ENCODE measurements at regions of chr19 and their contacts with region 1.

Region 1: DNA sequence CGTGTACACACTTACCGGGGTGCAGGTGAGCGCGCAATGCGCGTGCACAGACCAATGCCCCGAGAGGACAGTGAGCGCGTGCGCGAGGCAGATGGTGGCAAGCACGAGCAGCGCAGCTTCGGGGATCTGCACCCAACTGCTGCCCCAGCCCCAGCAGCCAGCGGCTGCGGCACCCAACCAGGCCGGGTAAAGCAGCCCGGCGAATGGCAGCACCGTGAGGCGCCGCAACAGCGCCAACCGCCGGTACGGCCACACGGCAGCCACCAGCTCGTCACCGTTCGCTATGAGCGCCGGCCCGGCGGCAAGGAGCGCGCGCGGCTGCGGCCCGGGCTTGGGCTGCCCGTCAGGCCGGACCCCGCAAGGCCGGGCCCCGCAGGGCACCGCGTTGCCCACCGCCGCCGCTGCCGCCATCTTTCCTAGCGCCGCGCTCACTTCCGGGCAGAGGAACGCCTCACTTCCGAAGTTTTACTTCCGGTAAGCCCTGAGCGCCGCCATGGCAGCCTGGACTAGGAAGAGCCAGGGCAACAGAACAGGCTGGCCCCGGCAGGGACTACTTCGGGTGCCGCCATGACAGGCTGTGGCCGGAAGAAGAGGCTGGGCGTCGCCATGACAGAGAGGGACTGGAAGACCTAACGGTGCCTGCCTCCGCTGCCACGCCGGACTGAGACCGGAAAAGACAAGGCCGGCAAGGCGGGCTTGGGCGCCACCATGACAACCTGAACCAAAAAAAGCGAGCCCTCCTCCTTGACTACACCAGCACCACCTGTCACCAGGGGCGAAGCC is at the start of gene ATP13A1:
- DNase-seq: peak; percentile 97 to 99 (median 99)
- ATAC-seq: peak; percentile 97 to 98 (median 98)
- H3K4me3 ChIP-seq: peak within 1 kb of the TSS; percentile 78 to 100 (median 96)
- H3K27ac ChIP-seq: peak within 1 kb of the TSS; percentile 83 to 99 (median 95)
- H3K4me1 ChIP-seq: peaks cover 0 to 37% (median 21%) of the 10 kb centered on the region in 12 donors
- H3K27me3 ChIP-seq: no peaks in the 10 kb centered on the region
- CTCF ChIP-seq: peak in 3 of 12 donors; percentile 8 to 34 (median 31)
- POLR2A ChIP-seq: peak in 1 of 2 donors; percentile 63
- total RNA-seq, gene ATP13A1: 15.7 to 65.8 (median 23.1) TPM

Region 2: DNA sequence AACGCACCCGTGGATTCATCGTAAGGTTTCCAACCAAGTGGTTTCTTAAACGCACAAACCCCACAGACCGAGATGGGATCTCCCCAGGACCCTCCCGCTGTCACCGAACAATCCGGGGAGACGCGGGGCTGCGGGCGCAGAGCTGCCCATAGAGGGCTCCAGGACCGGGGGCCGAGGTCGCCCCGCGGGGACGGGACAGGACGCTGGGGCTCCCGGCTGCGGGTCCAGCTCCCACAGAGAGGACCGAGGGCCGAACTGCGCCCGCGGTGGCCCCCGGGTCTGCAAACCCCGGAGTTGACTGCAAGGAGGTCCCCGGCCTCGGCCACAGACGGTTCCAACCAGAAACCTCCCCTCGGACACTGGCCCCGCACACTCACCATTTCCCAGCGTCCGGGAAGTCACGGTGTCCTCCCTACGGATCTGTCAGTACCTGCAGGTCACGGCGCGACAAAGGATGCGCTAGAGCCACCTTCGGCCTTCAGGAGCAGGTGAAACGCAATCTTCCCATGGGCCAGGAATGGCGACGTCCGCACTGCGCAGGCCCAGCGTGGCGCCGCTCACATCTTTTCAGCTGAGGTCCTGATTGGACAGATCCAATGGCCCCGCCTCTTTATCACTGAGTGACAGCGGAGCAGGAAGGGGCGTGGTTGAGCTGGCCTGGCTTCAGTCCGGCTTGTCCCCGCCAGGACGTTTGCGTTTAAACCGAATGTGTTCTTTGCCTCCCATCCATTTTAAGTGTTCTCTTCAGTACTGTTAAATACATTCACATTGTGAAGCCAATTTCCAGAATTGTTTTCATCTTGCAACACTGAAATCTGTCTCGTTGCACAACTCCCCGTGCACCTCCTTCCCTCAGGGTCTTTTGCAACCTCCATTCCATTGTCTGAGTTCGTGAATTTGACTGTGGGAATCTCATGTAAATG is 69.4 kb after region 1 on chr19 and contains the start of gene ZNF14:
- intact Hi-C with region 1: loop called in 1 of 10 experiments (anchors 5 kb)
- DNase-seq: peak; percentile 93 to 96 (median 95)
- ATAC-seq: peak; percentile 100
- H3K4me3 ChIP-seq: peak within 1 kb of the TSS; percentile 63 to 96 (median 84)
- H3K27ac ChIP-seq: peak within 1 kb of the TSS in 11 of 12 donors; percentile 58 to 83 (median 76)
- H3K4me1 ChIP-seq: peaks cover 0 to 13% (median 8%) of the 10 kb centered on the region in 12 donors
- H3K27me3 ChIP-seq: no peaks in the 10 kb centered on the region
- CTCF ChIP-seq: peak in 7 of 12 donors; percentile 5 to 40 (median 17)
- POLR2A ChIP-seq: peak in 1 of 2 donors; percentile 85
- total RNA-seq, gene ZNF14: 2.9 to 7.9 (median 3.6) TPM

Region 3: GRCh38 chr19:19758164-19758563 is 94.7 kb after region 1 on chr19:
- intact Hi-C with region 1: no loop called
- DNase-seq: no peak
- ATAC-seq: no peak
- H3K4me3 ChIP-seq: no peak overlapping the region
- H3K27ac ChIP-seq: no peak overlapping the region
- H3K4me1 ChIP-seq: no peaks in the 10 kb centered on the region
- H3K27me3 ChIP-seq: no peaks in the 10 kb centered on the region
- CTCF ChIP-seq: no peak
- POLR2A ChIP-seq: no peak

Region 4: GRCh38 chr19:19788015-19788414 is 124.6 kb after region 1 on chr19:
- intact Hi-C with region 1: no loop called
- DNase-seq: no peak
- ATAC-seq: no peak
- H3K4me3 ChIP-seq: no peak overlapping the region
- H3K27ac ChIP-seq: no peak overlapping the region
- H3K4me1 ChIP-seq: peaks cover 0 to 3% (median 0%) of the 10 kb centered on the region in 12 donors
- H3K27me3 ChIP-seq: no peaks in the 10 kb centered on the region
- CTCF ChIP-seq: no peak
- POLR2A ChIP-seq: no peak

Region 5: GRCh38 chr19:19865739-19866481 is 202.5 kb after region 1 on chr19 and contains the start of gene ZNF253:
- intact Hi-C with region 1: loop called in 1 of 10 experiments (anchors 5 kb)
- DNase-seq: peak; percentile 97 to 99 (median 98)
- ATAC-seq: peak; percentile 99 to 100 (median 99)
- H3K4me3 ChIP-seq: peak within 1 kb of the TSS; percentile 53 to 93 (median 84)
- H3K27ac ChIP-seq: peak within 1 kb of the TSS; percentile 80 to 97 (median 94)
- H3K4me1 ChIP-seq: peaks cover 0 to 42% (median 25%) of the 10 kb centered on the region in 12 donors
- H3K27me3 ChIP-seq: peaks cover 0 to 3% (median 0%) of the 10 kb centered on the region in 9 donors
- CTCF ChIP-seq: no peak
- POLR2A ChIP-seq: peak; percentile 74 to 95
- total RNA-seq, gene ZNF253: 5.6 to 16.6 (median 8.1) TPM

Region 6: GRCh38 chr19:19877724-19878123 is 214.3 kb after region 1 on chr19:
- intact Hi-C with region 1: no loop called
- DNase-seq: no peak
- ATAC-seq: no peak
- H3K4me3 ChIP-seq: no peak overlapping the region
- H3K27ac ChIP-seq: no peak overlapping the region
- H3K4me1 ChIP-seq: peaks cover 0 to 15% (median 3%) of the 10 kb centered on the region in 12 donors
- H3K27me3 ChIP-seq: no peaks in the 10 kb centered on the region
- CTCF ChIP-seq: no peak
- POLR2A ChIP-seq: no peak

Measured in heart left ventricle (tissue), 16 donors.